Activated CD4-positive, alpha-beta T cell treated with anti-CD3 and anti-CD28 coated beads for 36 hours (primary cell): ENCODE measurements at regions of chr7 and their contacts with region 1.

Region 1: DNA sequence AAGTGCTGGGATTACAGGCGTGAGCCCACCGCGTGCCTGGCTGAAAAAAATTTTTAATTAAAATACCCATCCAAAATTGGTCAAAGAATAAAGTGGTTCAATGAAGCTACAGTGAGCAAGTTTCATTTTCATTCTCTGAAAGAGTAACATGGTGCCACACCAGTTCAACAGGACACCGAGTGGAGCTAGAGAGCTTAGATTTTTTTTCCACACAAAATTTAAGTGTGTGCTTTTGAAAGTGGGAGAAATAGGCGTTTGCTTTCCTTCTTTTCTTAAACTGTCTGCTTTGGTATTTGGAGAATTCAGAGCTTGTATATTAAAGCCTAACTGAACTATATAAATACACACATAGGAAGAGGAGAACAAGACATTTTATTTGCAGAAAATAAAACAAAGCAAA is 43.4 kb downstream of the BPGM start:
- DNase-seq: no peak
- ATAC-seq: peak; percentile 37
- H3K4me3 Mint-ChIP-seq: no peak overlapping the region
- H3K27ac Mint-ChIP-seq: peak overlapping the region; percentile 62
- H3K4me1 Mint-ChIP-seq: peaks cover 17% of the 10 kb centered on the region
- H3K27me3 Mint-ChIP-seq: peaks cover 2% of the 10 kb centered on the region

Region 2: DNA sequence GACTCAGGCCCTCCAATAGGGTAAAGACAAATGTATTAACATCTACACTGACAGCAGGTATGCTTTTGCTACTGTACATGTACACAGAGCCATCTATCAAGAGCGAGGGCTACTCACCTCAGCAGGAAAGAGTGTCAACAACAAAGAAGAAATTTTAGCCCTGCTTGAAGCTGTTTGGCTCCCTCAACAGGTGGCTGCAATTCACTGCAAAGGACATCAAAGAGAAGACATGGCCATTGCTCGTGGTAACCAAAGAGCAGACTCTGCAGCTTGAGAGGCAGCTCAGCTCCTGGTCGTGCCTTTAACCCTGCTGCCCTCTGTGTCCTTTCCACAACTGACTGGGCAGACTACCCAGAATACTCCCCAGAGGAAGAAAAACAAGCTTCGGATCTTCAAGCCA is 136.0 kb before region 1 on chr7:
- CTCF ChIA-PET with region 1: no interaction called
- POLR2A ChIA-PET with region 1: no interaction called
- intact Hi-C with region 1: no loop called
- DNase-seq: no peak
- ATAC-seq: no peak
- H3K4me3 Mint-ChIP-seq: no peak overlapping the region
- H3K27ac Mint-ChIP-seq: no peak overlapping the region
- H3K4me1 Mint-ChIP-seq: no peaks in the 10 kb centered on the region
- H3K27me3 Mint-ChIP-seq: peaks cover 3% of the 10 kb centered on the region

Region 3: DNA sequence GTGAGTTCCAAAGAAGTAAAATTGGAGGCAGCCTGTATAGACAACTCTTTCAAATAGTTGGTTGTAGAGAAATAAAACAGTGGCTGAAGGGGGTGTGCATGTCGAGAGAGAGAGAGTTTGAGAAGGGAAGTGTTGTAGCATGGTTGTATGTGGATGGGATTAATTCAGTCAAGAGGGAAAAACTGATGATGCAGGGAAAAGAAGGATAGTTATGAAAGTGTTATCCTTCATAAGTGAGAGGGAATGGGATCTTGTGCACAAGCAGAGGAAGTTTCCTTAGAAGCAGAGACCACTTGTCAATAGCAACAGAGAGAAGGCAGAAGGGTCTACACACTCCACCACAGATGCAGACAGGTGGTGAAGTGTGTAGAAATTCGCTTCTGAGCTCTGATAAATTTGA is 73.4 kb before region 1 on chr7:
- CTCF ChIA-PET with region 1: no interaction called
- POLR2A ChIA-PET with region 1: no interaction called
- intact Hi-C with region 1: no loop called
- DNase-seq: no peak
- ATAC-seq: no peak
- H3K4me3 Mint-ChIP-seq: no peak overlapping the region
- H3K27ac Mint-ChIP-seq: no peak overlapping the region
- H3K4me1 Mint-ChIP-seq: peaks cover 12% of the 10 kb centered on the region
- H3K27me3 Mint-ChIP-seq: peaks cover 34% of the 10 kb centered on the region

Region 4: DNA sequence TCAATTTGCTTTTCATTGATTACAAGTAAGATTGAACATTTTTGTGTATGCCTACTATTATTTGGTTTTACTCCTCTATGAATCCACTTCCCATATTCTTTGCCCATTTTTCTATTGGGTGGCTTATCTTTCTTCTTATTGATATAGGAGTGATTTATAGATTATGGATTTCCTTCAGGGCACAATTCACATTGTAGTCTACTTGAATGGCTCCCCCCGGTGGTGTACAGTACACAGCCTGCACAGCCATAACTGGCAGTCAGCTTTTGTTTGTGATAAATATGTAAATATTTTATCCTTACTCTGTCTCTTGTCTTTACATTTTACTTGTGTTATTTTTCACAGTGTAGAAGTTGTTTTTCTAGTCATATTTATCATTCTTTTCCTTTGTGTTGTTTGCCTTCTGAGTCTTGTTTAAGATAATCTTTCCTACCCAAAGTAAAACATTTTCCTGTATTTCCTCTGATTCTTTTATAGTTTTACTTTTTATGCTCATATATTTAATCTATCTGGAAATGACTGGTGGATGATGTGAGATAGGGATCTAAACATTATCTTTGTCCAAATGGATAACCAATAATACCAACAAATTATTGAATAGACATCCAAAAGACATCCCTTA is 65.5 kb after region 1 on chr7:
- CTCF ChIA-PET with region 1: interaction called, 14 read pairs
- POLR2A ChIA-PET with region 1: no interaction called
- intact Hi-C with region 1: loop called (anchors 1 to 2 kb)
- DNase-seq: peak; percentile 74
- ATAC-seq: peak; percentile 44
- H3K4me3 Mint-ChIP-seq: no peak overlapping the region
- H3K27ac Mint-ChIP-seq: no peak overlapping the region
- H3K4me1 Mint-ChIP-seq: peaks cover 10% of the 10 kb centered on the region
- H3K27me3 Mint-ChIP-seq: no peaks in the 10 kb centered on the region

Region 5: DNA sequence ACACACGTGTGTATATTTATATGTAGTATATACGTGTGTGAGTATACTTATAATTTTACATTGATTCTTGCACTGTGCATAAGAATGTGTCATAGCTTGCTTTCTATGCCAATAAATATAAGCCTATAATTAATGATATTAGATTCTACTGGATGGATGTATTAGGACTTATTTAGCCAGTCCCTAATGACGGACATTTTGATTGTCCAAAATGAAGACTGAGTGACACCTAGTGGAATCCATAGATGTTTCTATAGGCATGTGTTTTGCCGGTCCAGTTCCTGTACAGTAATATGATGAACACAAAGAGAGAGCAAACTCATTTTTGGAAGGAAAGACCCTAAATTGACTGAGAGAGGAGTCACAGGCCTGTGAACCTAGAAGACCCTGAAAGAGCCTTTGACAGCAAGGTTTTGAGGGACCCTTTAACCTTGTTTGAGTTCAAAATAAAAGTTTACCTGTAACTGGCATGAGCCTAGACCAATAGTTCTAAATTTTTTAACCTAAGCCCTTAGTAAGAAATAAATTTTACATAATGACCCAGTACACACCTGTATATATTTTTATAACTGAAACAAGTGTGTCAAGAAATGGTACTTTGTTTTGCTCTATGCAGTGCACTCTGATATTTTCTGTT is 253.9 kb after region 1 on chr7:
- CTCF ChIA-PET with region 1: no interaction called
- POLR2A ChIA-PET with region 1: no interaction called
- intact Hi-C with region 1: loop called in 1 of 2 experiments (anchors 2 kb)
- DNase-seq: no peak
- ATAC-seq: no peak
- H3K4me3 Mint-ChIP-seq: no peak overlapping the region
- H3K27ac Mint-ChIP-seq: no peak overlapping the region
- H3K4me1 Mint-ChIP-seq: peaks cover 18% of the 10 kb centered on the region
- H3K27me3 Mint-ChIP-seq: no peaks in the 10 kb centered on the region